ENCODE measurements at regions of chr22 and their contacts with region 1.

Region 1: DNA sequence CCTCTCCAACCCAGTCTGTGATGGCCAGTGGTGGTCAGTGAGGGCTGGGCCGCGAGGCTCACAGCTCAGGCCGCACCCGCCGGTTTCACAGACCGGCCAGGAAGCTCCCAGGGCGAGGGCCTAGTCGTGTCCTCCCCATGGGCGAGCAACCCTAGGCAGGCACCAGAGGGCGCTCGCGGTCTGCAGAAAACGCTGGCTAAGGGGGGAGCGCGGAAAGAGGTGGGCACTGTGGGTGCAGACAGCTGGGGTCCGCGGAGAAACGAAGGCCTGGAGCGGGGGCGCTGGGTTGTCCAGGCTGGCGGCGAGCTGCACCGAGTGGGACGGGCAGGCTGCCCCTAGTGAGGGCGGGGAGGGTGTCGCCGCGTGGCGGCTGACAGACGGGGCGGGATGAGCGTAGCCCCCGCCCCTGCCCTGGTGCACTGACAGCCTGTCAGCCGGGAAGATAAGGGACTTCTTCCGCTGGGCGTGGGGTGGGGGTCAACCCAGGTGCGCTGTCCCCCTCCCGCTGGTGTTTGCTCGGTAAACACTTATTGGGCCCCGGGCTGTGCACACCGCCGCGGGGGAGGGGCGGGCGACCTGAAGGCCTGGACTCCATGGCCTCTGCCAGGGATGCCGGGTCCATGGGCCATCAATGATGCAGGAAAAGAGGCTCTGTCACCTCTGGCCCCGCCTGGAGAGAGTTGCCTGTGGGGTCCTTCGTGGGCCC is 7.5 kb downstream of the GP1BB start:
- DNase-seq: no peak
- H3K4me3 ChIP-seq: peak overlapping the region in 3 of 4 donors; percentile 40 to 65 (median 42)
- H3K27ac ChIP-seq: no peak overlapping the region
- H3K4me1 ChIP-seq: peaks cover 6 to 12% (median 11%) of the 10 kb centered on the region in 3 donors
- H3K27me3 ChIP-seq: peaks cover 0 to 45% (median 0%) of the 10 kb centered on the region in 4 donors
- CTCF ChIP-seq: peak; percentile 71 to 97 (median 95)
- POLR2A ChIP-seq: no peak

Region 2: DNA sequence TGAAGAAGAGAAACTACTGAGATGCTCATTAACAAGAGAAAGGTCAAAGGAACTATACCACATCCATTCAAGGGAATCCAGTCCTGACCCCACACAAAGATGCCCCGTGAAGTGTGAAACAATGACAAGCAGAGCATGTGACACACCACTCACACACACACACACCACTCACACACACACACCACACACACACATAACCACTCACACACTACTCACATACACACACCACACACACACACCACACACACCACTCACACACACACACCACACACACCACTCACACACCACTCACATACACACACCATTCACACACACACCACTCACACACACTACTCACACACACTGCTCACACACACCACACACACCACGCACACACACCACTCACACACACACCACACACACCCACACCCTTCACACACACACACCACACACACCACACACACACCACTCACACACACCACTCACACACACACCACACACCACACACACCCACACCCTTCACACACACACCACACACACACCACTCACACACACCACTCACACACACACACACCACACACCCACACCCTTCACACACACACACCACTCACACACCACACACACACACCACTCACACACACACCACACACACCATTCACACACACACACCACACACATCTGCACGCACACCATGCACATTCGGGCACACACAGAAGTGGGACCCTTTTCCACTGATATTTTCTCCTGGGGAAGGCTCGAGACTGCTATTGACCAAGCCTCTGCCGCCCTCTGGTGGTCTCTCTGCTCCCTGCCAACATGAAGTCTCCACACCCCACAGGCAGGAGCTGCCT is 178.8 kb after region 1 on chr22:
- intact Hi-C with region 1: loop called (anchors 2 kb)
- DNase-seq: no peak
- H3K4me3 ChIP-seq: no peak overlapping the region
- H3K27ac ChIP-seq: no peak overlapping the region
- H3K4me1 ChIP-seq: peaks cover 0 to 9% (median 0%) of the 10 kb centered on the region in 3 donors
- H3K27me3 ChIP-seq: no peaks in the 10 kb centered on the region
- CTCF ChIP-seq: peak; percentile 81 to 94 (median 91)
- POLR2A ChIP-seq: no peak

Measured in esophagus squamous epithelium (tissue), 5 donors.